H1 (cell line): ENCODE measurements at regions of chr2 and their contacts with region 1.

Region 1: DNA sequence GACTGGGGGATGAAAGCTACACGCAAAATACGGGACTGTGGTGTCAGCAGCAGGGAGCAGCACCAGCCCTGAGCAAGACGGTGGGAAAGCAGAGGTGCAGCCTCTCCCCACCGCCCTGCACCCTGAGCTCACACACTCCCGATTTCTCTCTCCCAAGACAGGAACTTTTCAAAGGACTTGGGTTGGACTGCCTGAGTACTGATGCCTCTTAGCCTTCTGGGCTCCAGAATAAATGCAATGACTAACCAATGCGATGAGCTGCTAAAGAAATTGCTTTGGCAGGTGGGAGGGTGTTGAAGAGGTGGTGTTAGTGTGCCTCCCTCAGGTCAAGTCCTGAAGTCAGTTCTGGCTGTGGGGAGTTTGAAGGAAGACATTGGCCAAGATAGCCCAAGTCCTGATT is 9.6 kb downstream of the TRIM54 start:
- DNase-seq: no peak
- H3K4me3 ChIP-seq: no peak overlapping the region
- H3K27ac ChIP-seq: no peak overlapping the region
- H3K4me1 ChIP-seq: peaks cover 0 to 4% (median 2%) of the 10 kb centered on the region in 4 experiments; a peak in 3 of 7 replicates
- H3K27me3 ChIP-seq: no peaks in the 10 kb centered on the region; a peak in 1 of 7 replicates
- CTCF ChIP-seq: peak; percentile 59 to 74 (median 70)
- EP300 ChIP-seq: no peak
- POLR2A ChIP-seq: no peak
- RAD21 ChIP-seq: peak; percentile 80 to 87

Region 2: DNA sequence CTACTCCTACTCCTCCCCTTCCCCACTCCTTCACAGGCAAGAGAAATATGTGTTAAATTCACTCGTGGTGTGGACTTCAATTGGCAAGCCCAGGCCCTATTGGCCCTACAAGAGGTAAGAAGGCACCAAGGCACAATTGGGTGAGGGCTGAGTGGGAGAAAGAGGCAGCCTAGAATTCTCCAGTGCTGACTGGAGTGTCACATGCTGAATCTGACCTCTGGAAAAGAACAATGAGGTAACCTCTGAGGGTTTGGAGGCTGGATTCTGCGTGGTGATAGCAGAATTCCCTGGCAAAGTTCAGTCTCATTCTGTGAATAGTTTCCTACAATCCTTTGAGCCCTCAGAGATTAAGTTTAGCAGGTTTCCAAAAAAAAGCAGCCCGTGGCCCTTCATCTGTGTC is 499.1 kb before region 1 on chr2:
- CTCF ChIA-PET with region 1: no interaction called
- POLR2A ChIA-PET with region 1: no interaction called
- DNase-seq: no peak
- H3K4me3 ChIP-seq: no peak overlapping the region
- H3K27ac ChIP-seq: no peak overlapping the region
- H3K4me1 ChIP-seq: no peaks in the 10 kb centered on the region
- H3K27me3 ChIP-seq: no peaks in the 10 kb centered on the region
- CTCF ChIP-seq: no peak
- EP300 ChIP-seq: no peak
- POLR2A ChIP-seq: no peak
- RAD21 ChIP-seq: no peak

Region 3: GRCh38 chr2:27241761-27242613 is 49.9 kb before region 1 on chr2:
- CTCF ChIA-PET with region 1: interaction called, 116 read pairs
- POLR2A ChIA-PET with region 1: interaction called, 11 read pairs
- DNase-seq: no peak
- H3K4me3 ChIP-seq: no peak overlapping the region
- H3K27ac ChIP-seq: no peak overlapping the region
- H3K4me1 ChIP-seq: no peaks in the 10 kb centered on the region
- H3K27me3 ChIP-seq: no peaks in the 10 kb centered on the region
- CTCF ChIP-seq: no peak
- EP300 ChIP-seq: no peak
- POLR2A ChIP-seq: no peak
- RAD21 ChIP-seq: no peak

Region 4: GRCh38 chr2:27264753-27265535 is 26.9 kb before region 1 on chr2:
- CTCF ChIA-PET with region 1: interaction called, 103 read pairs
- POLR2A ChIA-PET with region 1: interaction called, 5 read pairs
- DNase-seq: peak in 1 of 2 experiments; percentile 89
- H3K4me3 ChIP-seq: peak overlapping the region; percentile 57 to 85 (median 62)
- H3K27ac ChIP-seq: no peak overlapping the region
- H3K4me1 ChIP-seq: peaks cover 3 to 19% (median 14%) of the 10 kb centered on the region in 4 experiments
- H3K27me3 ChIP-seq: peaks cover 39 to 69% (median 60%) of the 10 kb centered on the region in 4 experiments
- CTCF ChIP-seq: peak in 2 of 3 experiments; percentile 76 to 88; a peak in 3 of 4 replicates
- EP300 ChIP-seq: no peak
- POLR2A ChIP-seq: peak in 1 of 2 experiments; percentile 63; a peak in 2 of 3 replicates
- RAD21 ChIP-seq: peak; percentile 42 to 63

Region 5: DNA sequence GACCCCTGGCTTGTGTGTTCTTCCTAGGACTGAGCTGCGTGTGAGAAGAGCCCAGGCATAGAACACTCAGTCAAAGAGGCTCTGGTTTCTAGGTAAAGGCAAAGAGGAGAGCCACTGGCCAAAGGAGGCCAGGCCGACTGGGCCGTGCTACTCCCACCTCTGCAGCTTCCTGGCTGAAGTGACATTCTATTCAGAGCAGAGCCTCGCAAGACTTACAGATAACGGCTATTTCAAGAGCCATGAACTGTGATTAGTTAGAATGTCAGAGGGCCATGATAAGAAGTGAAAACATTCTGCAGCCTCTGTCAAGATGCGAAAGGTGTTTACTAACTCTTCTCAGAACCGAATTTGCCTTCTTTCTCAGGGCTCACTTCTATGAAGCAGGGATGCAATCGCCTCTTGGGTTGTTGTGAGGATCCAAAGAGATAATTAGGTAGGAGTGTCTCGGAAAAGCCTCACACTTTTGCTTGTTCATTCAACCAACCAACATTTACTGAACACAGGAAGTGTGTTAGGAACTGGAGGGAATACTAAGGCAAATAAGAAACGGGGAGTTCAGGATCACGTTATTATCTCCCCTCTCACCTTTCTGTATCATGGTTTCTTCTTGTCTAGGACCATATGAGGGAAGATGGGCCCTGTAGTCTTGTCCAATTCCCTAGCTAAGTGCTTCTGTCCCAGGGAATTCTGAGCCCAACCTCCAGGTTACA is 20.1 kb before region 1 on chr2:
- CTCF ChIA-PET with region 1: interaction called, 413 read pairs
- POLR2A ChIA-PET with region 1: interaction called, 5 read pairs
- DNase-seq: no peak
- H3K4me3 ChIP-seq: no peak overlapping the region
- H3K27ac ChIP-seq: no peak overlapping the region
- H3K4me1 ChIP-seq: peaks cover 0 to 5% (median 0%) of the 10 kb centered on the region in 4 experiments; a peak in 2 of 7 replicates
- H3K27me3 ChIP-seq: peaks cover 0 to 7% (median 2%) of the 10 kb centered on the region in 4 experiments; a peak in 2 of 7 replicates
- CTCF ChIP-seq: no peak
- EP300 ChIP-seq: no peak
- POLR2A ChIP-seq: no peak
- RAD21 ChIP-seq: no peak